Heart right ventricle (tissue), 16 donors: ENCODE measurements at regions of chr5 and their contacts with region 1.

Region 1: GRCh38 chr5:74595143-74595925 is 45.2 kb downstream of the ENC1 start:
- DNase-seq: peak in 1 of 2 donors; percentile 15
- ATAC-seq: peak in 4 of 8 donors; percentile 62 to 85 (median 64)
- H3K4me3 ChIP-seq: no peak overlapping the region
- H3K27ac ChIP-seq: peak overlapping the region in 6 of 10 donors; percentile 1 to 36 (median 22)
- H3K4me1 ChIP-seq: peaks cover 0 to 25% (median 13%) of the 10 kb centered on the region in 9 donors
- H3K27me3 ChIP-seq: no peaks in the 10 kb centered on the region
- CTCF ChIP-seq: no peak

Region 2: GRCh38 chr5:74299435-74300232 is 295.7 kb before region 1 on chr5:
- intact Hi-C with region 1: no loop called
- DNase-seq: no peak
- ATAC-seq: no peak
- H3K4me3 ChIP-seq: no peak overlapping the region
- H3K27ac ChIP-seq: no peak overlapping the region
- H3K4me1 ChIP-seq: peaks cover 0 to 10% (median 4%) of the 10 kb centered on the region in 9 donors
- H3K27me3 ChIP-seq: no peaks in the 10 kb centered on the region
- CTCF ChIP-seq: no peak

Region 3: GRCh38 chr5:74543156-74543995 is 52.0 kb before region 1 on chr5:
- intact Hi-C with region 1: loop called in 1 of 10 experiments (anchors 5 kb)
- DNase-seq: no peak
- ATAC-seq: peak in 2 of 8 donors; percentile 13 to 28
- H3K4me3 ChIP-seq: no peak overlapping the region
- H3K27ac ChIP-seq: peak overlapping the region in 1 of 10 donors; percentile 60
- H3K4me1 ChIP-seq: peaks cover 0 to 27% (median 16%) of the 10 kb centered on the region in 9 donors
- H3K27me3 ChIP-seq: peaks cover 0 to 8% (median 0%) of the 10 kb centered on the region in 7 donors
- CTCF ChIP-seq: no peak

Region 4: GRCh38 chr5:74624540-74625505 is 29.5 kb after region 1 on chr5:
- intact Hi-C with region 1: loop called in 1 of 10 experiments (anchors 1 kb)
- DNase-seq: no peak
- ATAC-seq: no peak
- H3K4me3 ChIP-seq: no peak overlapping the region
- H3K27ac ChIP-seq: no peak overlapping the region
- H3K4me1 ChIP-seq: peaks cover 0 to 13% (median 0%) of the 10 kb centered on the region in 9 donors
- H3K27me3 ChIP-seq: no peaks in the 10 kb centered on the region
- CTCF ChIP-seq: no peak